Activated T-helper 2 cell treated with anti-CD3 and anti-CD28 coated beads, Interferon-gamma antibody, Interleukin-2, Interleukin-4, amounts not matched to agents 10 μg/mL and 5 μg/mL and 100 μg/mL, durations not matched to agents 14 hours and 24 hours and 36 hours (primary cell): ENCODE measurements at regions of chr7 and their contacts with region 1.

Region 1: GRCh38 chr7:36784991-36785940 is 61.0 kb upstream of the AOAH start:
- DNase-seq: peak; percentile 48
- H3K4me3 Mint-ChIP-seq: no peak overlapping the region
- H3K27ac Mint-ChIP-seq: peak overlapping the region; percentile 78
- H3K4me1 Mint-ChIP-seq: peaks cover 69% of the 10 kb centered on the region
- H3K27me3 Mint-ChIP-seq: no peaks in the 10 kb centered on the region

Region 2: DNA sequence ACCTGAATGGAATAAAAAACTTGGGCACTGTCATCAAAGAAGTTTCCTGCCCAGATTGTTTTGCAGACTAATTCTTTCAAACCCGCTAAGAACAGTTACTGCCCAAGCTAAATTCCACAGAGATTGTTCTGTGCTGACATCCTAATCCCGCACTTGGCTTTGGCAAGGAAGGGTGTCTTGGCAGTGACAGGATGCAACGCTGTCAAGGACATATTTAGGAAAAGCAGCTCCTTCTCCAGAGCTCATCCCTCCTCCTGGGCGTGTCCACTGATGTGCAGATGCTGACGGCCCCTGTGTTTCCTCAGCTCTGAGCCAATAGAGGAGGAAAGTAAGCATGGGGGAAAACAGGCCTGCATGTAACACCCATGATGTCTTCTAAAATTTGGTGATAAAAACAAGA is 558.0 kb before region 1 on chr7:
- intact Hi-C with region 1: no loop called
- DNase-seq: no peak
- H3K4me3 Mint-ChIP-seq: no peak overlapping the region
- H3K27ac Mint-ChIP-seq: no peak overlapping the region
- H3K4me1 Mint-ChIP-seq: no peaks in the 10 kb centered on the region
- H3K27me3 Mint-ChIP-seq: peaks cover 5% of the 10 kb centered on the region

Region 3: DNA sequence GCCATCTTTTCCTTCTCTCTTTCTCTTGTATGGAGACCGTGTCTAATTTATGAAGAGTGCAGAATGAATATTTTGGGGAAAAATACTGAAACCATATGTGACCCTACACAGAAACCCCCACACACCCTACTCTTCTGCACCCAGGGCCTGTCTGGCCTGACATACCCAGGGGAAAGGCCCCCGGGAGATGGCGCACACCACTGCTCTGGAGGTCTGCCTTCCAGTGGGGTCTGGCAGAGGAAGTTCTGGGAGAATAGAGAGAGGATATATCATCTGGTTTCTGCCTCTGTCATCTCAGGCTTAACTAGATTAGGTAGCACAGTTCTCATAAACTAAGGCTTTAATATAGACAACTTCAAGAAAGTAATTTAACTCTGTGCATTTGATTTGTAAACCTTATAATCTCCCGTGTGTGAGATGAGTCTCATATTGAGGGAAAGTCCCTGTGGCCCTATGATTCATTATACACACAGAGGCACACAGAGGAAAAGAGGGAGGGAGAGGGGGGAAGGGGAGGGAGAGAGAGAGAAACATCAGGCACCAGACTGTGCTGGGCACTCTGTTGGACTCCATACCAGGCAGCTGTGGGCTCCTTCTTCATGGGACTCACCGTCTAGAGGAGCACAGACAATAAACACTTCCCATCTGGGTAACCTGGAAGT is 184.3 kb before region 1 on chr7:
- intact Hi-C with region 1: loop called (anchors 5 kb)
- DNase-seq: no peak
- H3K4me3 Mint-ChIP-seq: no peak overlapping the region
- H3K27ac Mint-ChIP-seq: peak overlapping the region; percentile 70
- H3K4me1 Mint-ChIP-seq: peaks cover 69% of the 10 kb centered on the region
- H3K27me3 Mint-ChIP-seq: no peaks in the 10 kb centered on the region

Region 4: DNA sequence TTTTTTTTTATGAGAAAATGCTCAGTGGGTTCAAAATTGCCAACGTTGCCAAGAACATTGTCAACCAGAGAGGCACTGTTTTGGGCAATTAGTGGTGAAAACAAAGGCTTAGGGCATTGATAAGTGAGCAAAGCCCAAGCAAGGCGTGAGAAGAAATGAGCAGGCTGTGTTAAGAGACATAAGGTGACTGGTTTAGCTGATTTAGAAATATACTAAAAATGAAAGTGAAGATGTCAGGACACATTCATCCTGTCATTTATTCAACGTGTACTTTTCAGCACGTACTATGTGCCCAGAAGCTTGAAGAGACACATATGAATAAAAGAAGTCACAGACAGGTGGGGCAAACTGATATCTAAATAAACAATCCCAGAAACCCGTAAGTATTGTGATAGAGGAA is 92.8 kb before region 1 on chr7:
- intact Hi-C with region 1: loop called (anchors 2 kb)
- DNase-seq: no peak
- H3K4me3 Mint-ChIP-seq: peak overlapping the region; percentile 87
- H3K27ac Mint-ChIP-seq: peak overlapping the region; percentile 99
- H3K4me1 Mint-ChIP-seq: peaks cover 59% of the 10 kb centered on the region
- H3K27me3 Mint-ChIP-seq: no peaks in the 10 kb centered on the region

Region 5: GRCh38 chr7:36736899-36737211 is 48.4 kb before region 1 on chr7:
- intact Hi-C with region 1: loop called (anchors 5 kb)
- DNase-seq: no peak
- H3K4me3 Mint-ChIP-seq: no peak overlapping the region
- H3K27ac Mint-ChIP-seq: peak overlapping the region; percentile 79
- H3K4me1 Mint-ChIP-seq: peaks cover 37% of the 10 kb centered on the region
- H3K27me3 Mint-ChIP-seq: no peaks in the 10 kb centered on the region

Region 6: DNA sequence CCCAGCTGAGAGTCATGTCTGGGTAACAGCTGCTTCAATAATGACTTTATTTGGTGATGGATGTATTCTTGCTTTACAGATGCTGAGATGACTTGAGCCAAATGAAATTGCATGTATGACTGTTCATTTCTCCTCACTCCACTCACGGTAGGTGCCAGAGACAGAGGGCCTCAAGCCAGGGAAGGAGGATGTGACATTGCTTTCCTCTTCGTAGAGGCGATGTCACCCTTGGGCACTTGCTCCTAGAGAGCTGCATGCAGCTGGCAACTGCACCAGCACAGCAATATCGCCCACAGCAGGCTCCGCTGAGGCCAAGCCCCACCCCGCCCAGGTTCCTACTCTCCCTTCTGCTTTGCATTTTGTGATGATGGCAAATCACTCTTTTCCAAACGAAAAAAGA is 55.6 kb after region 1 on chr7:
- intact Hi-C with region 1: no loop called
- DNase-seq: no peak
- H3K4me3 Mint-ChIP-seq: no peak overlapping the region
- H3K27ac Mint-ChIP-seq: no peak overlapping the region
- H3K4me1 Mint-ChIP-seq: no peaks in the 10 kb centered on the region
- H3K27me3 Mint-ChIP-seq: no peaks in the 10 kb centered on the region

Region 7: GRCh38 chr7:37061849-37062559 is 276.7 kb after region 1 on chr7:
- intact Hi-C with region 1: no loop called
- DNase-seq: no peak
- H3K4me3 Mint-ChIP-seq: no peak overlapping the region
- H3K27ac Mint-ChIP-seq: no peak overlapping the region
- H3K4me1 Mint-ChIP-seq: peaks cover 35% of the 10 kb centered on the region
- H3K27me3 Mint-ChIP-seq: no peaks in the 10 kb centered on the region